ENCODE measurements at regions of chr19 and their contacts with region 1.

Region 1: GRCh38 chr19:47273313-47273977 is 1.2 kb upstream of the INAFM1 start:
- DNase-seq: no peak
- H3K4me3 ChIP-seq: peak overlapping the region; percentile 78
- H3K27me3 ChIP-seq: no peaks in the 10 kb centered on the region
- CTCF ChIP-seq: no peak

Region 2: DNA sequence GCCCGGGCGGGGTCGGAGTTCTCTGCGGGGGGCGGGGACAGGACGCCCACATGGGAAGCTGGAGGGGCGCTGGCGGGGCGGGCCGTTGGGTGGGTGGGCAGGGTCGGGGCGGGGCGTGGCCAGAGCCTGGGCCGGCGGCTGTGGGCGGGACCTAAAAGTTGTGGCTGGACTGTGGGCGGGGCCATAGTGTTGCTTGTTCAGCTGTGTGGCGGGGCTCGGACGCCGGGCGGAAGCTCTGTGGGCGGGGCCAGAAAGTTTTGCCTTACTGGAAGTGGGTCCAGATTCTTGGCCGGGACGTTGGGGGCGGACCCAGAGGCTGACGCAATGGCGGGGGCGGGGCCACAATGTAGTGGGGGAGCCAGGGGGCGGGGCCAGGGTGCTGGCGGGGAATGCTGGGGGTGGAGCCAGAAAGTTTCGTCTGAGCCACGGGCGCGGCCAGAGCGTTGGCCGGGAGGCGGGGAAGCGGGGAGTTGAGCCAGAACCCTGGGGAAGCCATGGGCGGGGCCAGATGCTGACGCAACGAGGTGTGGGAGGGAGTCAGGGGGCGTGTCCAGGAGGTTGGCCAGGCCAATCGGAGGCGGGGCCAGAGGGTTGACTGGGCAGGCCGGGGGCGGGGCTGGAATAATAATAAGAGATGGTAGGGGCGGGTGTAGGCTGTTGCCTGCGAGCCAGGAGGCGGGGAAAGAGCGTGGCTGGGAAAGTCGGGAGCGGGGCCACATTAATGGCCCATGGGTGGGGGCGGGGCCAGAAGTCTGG is 16.6 kb before region 1 on chr19:
- CTCF ChIA-PET with region 1: interaction called, 4 read pairs
- POLR2A ChIA-PET with region 1: interaction called, 15 read pairs
- DNase-seq: peak; percentile 87
- H3K4me3 ChIP-seq: peak overlapping the region; percentile 63
- H3K27me3 ChIP-seq: no peaks in the 10 kb centered on the region
- CTCF ChIP-seq: no peak

Region 3: GRCh38 chr19:47284324-47284899 is 11.0 kb after region 1 on chr19:
- CTCF ChIA-PET with region 1: interaction called, 25 read pairs
- POLR2A ChIA-PET with region 1: no interaction called
- DNase-seq: no peak
- H3K4me3 ChIP-seq: no peak overlapping the region
- H3K27me3 ChIP-seq: no peaks in the 10 kb centered on the region
- CTCF ChIP-seq: peak; percentile 84

Region 4: DNA sequence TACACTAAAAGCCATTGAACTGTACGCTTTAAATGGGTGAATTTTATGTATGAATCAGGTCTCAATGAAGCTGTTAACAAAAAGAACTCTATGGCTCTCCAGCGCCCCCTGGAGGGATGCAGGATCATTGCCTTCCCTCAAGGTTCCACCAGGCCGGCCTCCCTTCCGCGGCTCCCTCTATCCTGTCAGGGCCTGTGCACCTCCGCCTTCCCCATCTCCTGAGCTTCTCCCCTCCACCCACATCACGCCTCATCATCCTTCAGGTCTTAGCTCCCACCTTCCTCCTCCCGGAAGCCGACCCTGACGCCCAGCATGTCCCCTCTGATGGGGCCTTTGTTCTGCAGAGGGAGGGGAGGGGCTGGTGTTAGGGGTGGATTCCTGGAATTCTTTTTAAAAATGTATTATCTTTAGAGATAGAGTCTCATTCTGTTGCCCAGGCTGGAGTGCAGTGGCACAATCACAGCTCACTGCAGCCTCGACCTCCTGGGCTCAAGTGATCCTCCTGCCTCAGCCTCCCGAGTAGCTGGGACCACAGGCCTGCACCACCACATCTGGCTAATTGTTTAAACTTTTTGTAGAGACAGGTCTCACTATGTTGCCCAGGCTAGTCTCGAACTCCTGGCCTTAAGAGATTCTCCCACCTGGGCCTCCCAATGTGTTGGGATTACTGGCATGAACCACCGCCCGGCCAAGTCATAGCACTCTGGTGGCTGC is 118.2 kb after region 1 on chr19:
- CTCF ChIA-PET with region 1: interaction called, 14 read pairs
- POLR2A ChIA-PET with region 1: no interaction called
- DNase-seq: peak; percentile 4
- H3K4me3 ChIP-seq: no peak overlapping the region
- H3K27me3 ChIP-seq: peaks cover 2% of the 10 kb centered on the region; the same call in 1 of the 2 replicates
- CTCF ChIP-seq: peak; percentile 92

Region 5: GRCh38 chr19:47428177-47428894 is 154.9 kb after region 1 on chr19:
- CTCF ChIA-PET with region 1: interaction called, 10 read pairs
- POLR2A ChIA-PET with region 1: no interaction called
- DNase-seq: peak; percentile 97
- H3K4me3 ChIP-seq: peak overlapping the region; percentile 24; the same call in 1 of the 2 replicates
- H3K27me3 ChIP-seq: peaks cover 9% of the 10 kb centered on the region
- CTCF ChIP-seq: no peak